Activated CD4-positive, alpha-beta memory T cell treated with anti-CD3 and anti-CD28 coated beads for 36 hours (primary cell): ENCODE measurements at regions of chr6 and their contacts with region 1.

Region 1: GRCh38 chr6:28940858-28941680 is 17.3 kb upstream of the TRIM27 start:
- DNase-seq: peak; percentile 82
- H3K4me3 Mint-ChIP-seq: peak overlapping the region; percentile 84
- H3K27ac Mint-ChIP-seq: peak overlapping the region; percentile 96
- H3K4me1 Mint-ChIP-seq: peaks cover 48% of the 10 kb centered on the region
- H3K27me3 Mint-ChIP-seq: no peaks in the 10 kb centered on the region

Region 2: GRCh38 chr6:28710466-28711191 is 230.4 kb before region 1 on chr6:
- CTCF ChIA-PET with region 1: no interaction called
- POLR2A ChIA-PET with region 1: no interaction called
- intact Hi-C with region 1: loop called (anchors 5 kb)
- DNase-seq: peak; percentile 33
- H3K4me3 Mint-ChIP-seq: no peak overlapping the region
- H3K27ac Mint-ChIP-seq: no peak overlapping the region
- H3K4me1 Mint-ChIP-seq: peaks cover 8% of the 10 kb centered on the region
- H3K27me3 Mint-ChIP-seq: peaks cover 55% of the 10 kb centered on the region

Region 3: DNA sequence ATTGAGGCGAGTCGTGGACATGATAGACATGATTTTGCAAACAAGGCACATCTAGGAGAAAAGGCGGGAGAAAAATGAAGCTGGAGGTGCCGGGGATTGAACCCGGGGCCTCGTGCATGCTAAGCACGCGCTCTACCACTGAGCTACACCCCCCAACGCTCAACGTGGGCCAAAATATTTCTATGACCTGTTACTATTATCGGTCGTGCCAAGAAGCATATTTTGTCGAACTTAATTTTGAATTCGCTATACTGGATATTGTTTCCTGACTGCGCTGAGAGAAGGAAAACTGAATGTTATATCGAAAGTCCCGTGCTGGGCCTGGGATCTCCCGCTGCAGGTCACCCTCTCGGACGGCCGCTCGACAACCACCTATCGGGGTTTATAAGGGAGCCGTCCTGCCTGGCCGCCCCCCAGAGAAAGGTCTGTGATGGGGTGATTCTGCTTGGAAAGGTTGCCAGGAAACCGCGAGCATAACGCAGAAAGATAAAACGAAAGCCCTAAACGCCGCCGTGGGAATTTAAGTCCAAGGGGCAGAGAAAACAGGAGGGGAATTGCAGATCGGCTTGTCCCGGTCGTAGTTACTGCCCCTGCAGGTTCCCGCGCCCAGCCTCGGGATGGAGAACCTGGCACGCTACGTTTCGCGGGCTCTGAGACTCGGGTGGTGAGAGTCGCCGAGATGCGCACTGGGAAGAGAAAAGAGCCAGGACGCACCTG is 77.3 kb before region 1 on chr6:
- CTCF ChIA-PET with region 1: interaction called, 3 read pairs
- POLR2A ChIA-PET with region 1: interaction called, 3 read pairs
- intact Hi-C with region 1: loop called (anchors 1 kb)
- DNase-seq: peak; percentile 90
- H3K4me3 Mint-ChIP-seq: peak overlapping the region; percentile 82
- H3K27ac Mint-ChIP-seq: peak overlapping the region; percentile 91
- H3K4me1 Mint-ChIP-seq: peaks cover 38% of the 10 kb centered on the region
- H3K27me3 Mint-ChIP-seq: peaks cover 5% of the 10 kb centered on the region

Region 4: GRCh38 chr6:28895134-28895812 is 45.8 kb before region 1 on chr6:
- CTCF ChIA-PET with region 1: no interaction called
- POLR2A ChIA-PET with region 1: interaction called, 5 read pairs
- intact Hi-C with region 1: loop called (anchors 1 kb)
- DNase-seq: peak; percentile 95
- H3K4me3 Mint-ChIP-seq: peak overlapping the region; percentile 86
- H3K27ac Mint-ChIP-seq: peak overlapping the region; percentile 97
- H3K4me1 Mint-ChIP-seq: peaks cover 12% of the 10 kb centered on the region
- H3K27me3 Mint-ChIP-seq: peaks cover 2% of the 10 kb centered on the region

Region 5: DNA sequence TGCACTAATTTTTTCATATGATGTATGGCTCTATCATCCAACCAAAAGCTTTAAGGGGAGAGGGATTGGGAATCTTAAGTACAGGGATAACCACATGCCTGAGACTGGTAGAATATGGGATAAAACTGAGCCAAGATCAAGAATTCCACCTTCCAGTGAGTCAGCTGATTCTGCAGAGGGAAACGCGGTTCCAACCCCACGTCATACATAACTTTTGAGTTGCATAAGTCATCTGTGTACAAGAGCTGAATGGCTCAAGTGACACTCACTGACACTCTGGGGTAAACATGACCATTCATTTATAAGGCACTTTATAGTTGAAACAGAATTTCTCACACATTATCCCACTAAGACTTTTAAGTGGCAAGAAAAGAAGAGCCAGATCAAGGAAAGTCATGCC is 33.7 kb before region 1 on chr6:
- CTCF ChIA-PET with region 1: no interaction called
- POLR2A ChIA-PET with region 1: no interaction called
- intact Hi-C with region 1: no loop called
- DNase-seq: no peak
- H3K4me3 Mint-ChIP-seq: no peak overlapping the region
- H3K27ac Mint-ChIP-seq: no peak overlapping the region
- H3K4me1 Mint-ChIP-seq: no peaks in the 10 kb centered on the region
- H3K27me3 Mint-ChIP-seq: no peaks in the 10 kb centered on the region

Region 6: GRCh38 chr6:28953039-28953584 is 12.0 kb after region 1 on chr6:
- CTCF ChIA-PET with region 1: no interaction called
- POLR2A ChIA-PET with region 1: no interaction called
- intact Hi-C with region 1: loop called (anchors 1 kb)
- DNase-seq: peak; percentile 76
- H3K4me3 Mint-ChIP-seq: peak overlapping the region; percentile 78
- H3K27ac Mint-ChIP-seq: peak overlapping the region; percentile 25
- H3K4me1 Mint-ChIP-seq: peaks cover 15% of the 10 kb centered on the region
- H3K27me3 Mint-ChIP-seq: peaks cover 4% of the 10 kb centered on the region

Region 7: GRCh38 chr6:29016559-29017427 is 75.7 kb after region 1 on chr6:
- CTCF ChIA-PET with region 1: interaction called, 5 read pairs
- POLR2A ChIA-PET with region 1: no interaction called
- intact Hi-C with region 1: loop called (anchors 1 kb)
- DNase-seq: peak; percentile 88
- H3K4me3 Mint-ChIP-seq: peak overlapping the region; percentile 78
- H3K27ac Mint-ChIP-seq: peak overlapping the region; percentile 75
- H3K4me1 Mint-ChIP-seq: peaks cover 9% of the 10 kb centered on the region
- H3K27me3 Mint-ChIP-seq: peaks cover 6% of the 10 kb centered on the region